Ovary (tissue), 10 donors: ENCODE measurements at regions of chr11 and their contacts with region 1.

Region 1: DNA sequence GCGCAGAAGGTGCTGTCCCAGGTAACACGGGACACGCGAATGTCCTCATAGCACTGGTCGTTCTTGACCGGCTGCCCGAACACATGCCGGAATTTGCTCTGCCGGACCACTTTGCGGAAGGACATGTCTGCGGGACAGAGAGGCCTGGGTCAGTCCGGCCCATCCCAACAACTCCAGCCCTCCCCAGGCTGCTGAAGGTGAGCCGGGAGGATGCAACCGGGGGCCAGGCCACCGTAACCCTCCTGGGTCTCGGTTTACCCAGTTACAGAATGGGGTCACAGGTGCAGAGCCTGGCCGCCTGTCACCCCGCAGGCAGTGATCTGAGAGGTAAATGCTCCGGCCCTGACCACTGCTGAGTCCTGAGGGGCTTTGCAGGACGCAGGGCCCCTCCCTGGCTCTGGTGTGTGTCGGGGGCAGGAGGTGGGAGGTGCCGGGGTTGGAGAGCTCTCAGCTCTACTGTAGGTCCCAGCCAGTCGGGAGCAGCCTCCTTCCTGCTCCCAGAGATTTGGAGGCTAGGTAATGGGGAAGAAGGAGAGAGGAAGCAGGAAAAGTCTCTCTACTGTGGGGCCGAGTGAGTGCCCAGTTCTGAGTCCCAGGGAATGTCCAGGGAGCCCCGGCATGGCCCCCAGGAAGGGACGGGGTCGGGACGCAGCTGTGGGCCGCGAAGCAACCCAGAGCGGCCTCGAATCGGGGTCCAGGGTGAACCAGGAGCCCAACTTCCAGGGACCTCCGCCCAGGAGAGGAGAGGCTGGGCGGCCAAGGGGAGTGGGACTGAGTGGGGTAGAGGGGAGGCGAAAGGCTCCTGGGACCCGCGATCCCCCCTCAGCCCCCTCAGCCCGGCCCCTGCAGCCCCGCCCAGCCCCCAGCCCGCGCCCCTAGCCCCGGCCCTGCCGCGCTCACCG is 521 bp downstream of the CORO1B start:
- DNase-seq: peak in 2 of 5 donors; percentile 36 to 43
- H3K4me3 ChIP-seq: peak overlapping the region; percentile 69
- H3K27ac ChIP-seq: peak overlapping the region; percentile 94
- H3K4me1 ChIP-seq: peaks cover 4% of the 10 kb centered on the region
- H3K27me3 ChIP-seq: no peaks in the 10 kb centered on the region
- CTCF ChIP-seq: no peak
- EP300 ChIP-seq: no peak
- POLR2A ChIP-seq: no peak

Region 2: DNA sequence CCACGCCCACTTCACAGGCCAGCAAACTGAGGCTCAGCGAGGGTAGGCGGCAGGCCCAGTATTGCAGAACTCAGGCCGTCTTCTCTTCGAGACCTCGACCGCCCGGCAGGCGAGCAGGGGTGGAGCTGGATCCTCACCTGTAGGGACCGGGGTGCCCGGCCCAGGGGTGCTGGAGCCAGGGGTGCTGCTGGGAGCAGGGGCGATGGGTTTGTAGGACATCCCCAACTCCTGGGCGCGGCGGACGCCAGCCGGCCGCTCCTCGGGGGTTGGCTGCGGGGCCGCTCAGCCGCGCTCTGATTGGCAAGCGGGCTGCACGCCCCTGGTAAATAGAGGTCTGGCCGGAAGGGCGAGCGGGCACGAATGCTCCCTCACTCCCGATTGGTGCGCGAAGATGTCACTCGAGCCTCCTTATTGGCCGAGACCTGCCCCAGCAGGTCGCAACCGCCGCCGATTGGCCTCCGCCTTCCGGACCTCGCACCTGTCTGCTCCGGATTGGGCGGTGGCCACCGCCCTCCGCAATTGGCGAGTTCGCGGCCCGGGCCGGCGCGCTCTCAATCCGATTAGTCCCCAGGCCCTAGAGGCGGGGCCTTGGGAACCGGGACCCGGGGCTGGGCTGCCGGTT is 65.2 kb after region 1 on chr11 and contains the start of gene CDK2AP2:
- intact Hi-C with region 1: loop called in 1 of 4 experiments (anchors 10 kb)
- DNase-seq: peak; percentile 98 to 100 (median 99)
- H3K4me3 ChIP-seq: peak within 1 kb of the TSS; percentile 80
- H3K27ac ChIP-seq: peak within 1 kb of the TSS; percentile 63 to 79
- H3K4me1 ChIP-seq: peaks cover 13% of the 10 kb centered on the region
- H3K27me3 ChIP-seq: no peaks in the 10 kb centered on the region
- CTCF ChIP-seq: peak in 1 of 3 donors; percentile 22
- EP300 ChIP-seq: no peak
- POLR2A ChIP-seq: peak; percentile 68
- total RNA-seq, gene CDK2AP2: 15.8 to 66.1 (median 34.6) TPM